H1 (cell line): ENCODE measurements at regions of chr5 and their contacts with region 1.

Region 1: DNA sequence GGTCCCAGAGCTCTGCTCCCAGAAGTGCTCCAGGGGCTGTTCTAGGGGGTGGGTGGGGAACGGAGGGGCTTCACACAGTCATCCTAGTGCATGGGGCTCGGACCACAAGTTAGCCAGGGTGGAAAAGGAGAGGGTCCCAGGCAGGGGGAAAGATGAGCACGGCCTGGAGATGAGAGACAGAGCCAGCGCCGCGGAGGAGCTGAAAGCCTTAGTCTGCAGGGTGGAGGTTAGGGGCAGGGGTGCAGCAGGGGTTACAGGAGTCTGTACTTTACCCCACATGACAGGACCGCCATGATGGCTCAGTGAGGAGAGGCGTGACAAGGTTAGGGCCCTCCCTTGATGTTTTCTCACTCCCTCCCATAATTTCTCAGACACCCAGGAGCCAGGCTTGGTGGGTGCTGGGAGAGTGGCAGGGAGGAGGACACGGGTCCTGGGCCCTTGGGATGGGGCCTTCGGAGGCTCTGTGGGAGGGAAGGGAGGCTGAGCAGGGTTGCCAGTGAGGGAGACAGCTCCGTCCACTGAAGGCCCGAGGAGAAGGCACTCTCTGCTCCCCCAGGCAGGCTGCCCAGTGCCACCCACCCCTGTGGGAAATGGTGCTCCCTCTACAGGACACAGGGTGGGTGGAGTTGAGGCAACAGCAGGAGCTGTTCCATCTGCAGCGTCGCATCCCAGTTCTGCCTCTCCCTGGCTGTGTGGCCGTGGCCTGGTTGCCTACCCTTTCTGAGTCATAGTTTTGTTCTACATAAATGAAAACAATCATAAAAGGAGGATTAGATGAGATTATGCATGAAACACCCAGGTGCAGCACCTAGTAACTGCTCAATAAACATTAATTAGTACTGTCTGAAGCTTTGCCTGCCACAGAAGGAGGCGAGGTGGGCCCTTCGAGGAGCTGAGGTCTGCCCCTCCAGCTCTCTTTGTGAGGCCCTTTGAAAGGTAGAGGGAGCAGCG is 66.2 kb downstream of the NDST1 start:
- DNase-seq: no peak
- H3K4me3 ChIP-seq: no peak overlapping the region
- H3K27ac ChIP-seq: no peak overlapping the region
- H3K4me1 ChIP-seq: no peaks in the 10 kb centered on the region
- H3K27me3 ChIP-seq: no peaks in the 10 kb centered on the region
- CTCF ChIP-seq: peak; percentile 22 to 60 (median 43)
- EP300 ChIP-seq: no peak
- POLR2A ChIP-seq: no peak
- RAD21 ChIP-seq: no peak; a peak in 1 of 4 replicates

Region 2: GRCh38 chr5:150544611-150545219 is 29.4 kb before region 1 on chr5:
- CTCF ChIA-PET with region 1: interaction called, 14 read pairs
- POLR2A ChIA-PET with region 1: no interaction called
- DNase-seq: peak; percentile 67 to 97
- H3K4me3 ChIP-seq: no peak overlapping the region
- H3K27ac ChIP-seq: 0 out of 2 replicates have a peak overlapping the region, but pooled peaks have one; percentile 14
- H3K4me1 ChIP-seq: no peaks in the 10 kb centered on the region; a peak in 1 of 7 replicates
- H3K27me3 ChIP-seq: no peaks in the 10 kb centered on the region
- CTCF ChIP-seq: peak; percentile 99 to 100 (median 99)
- EP300 ChIP-seq: no peak
- POLR2A ChIP-seq: 0 out of 3 replicates have a peak, but pooled peaks of 1 of the 2 experiments have one; percentile 30
- RAD21 ChIP-seq: peak; percentile 81 to 89

Region 3: DNA sequence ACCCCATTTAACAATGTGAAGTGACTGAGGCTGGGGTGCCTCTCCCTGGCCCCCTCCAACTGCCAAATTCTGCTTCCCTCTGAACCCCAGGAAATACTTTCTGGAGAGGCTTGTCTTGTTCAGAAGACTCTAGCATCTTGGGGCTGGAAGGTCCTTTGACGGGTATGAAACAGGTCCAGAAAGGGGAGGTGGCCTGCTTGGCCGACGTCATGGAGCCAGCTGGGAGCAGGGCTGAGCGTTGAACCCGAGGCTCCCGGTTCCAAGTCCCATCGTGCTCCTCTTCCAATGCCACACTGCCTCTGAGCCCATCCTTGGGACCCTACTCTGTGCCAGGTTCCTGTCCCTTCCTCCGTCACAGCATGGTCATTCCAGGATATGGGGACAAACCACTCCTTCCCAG is 19.3 kb before region 1 on chr5:
- CTCF ChIA-PET with region 1: interaction called, 98 read pairs
- POLR2A ChIA-PET with region 1: interaction called, 3 read pairs
- DNase-seq: no peak
- H3K4me3 ChIP-seq: no peak overlapping the region
- H3K27ac ChIP-seq: no peak overlapping the region
- H3K4me1 ChIP-seq: peaks cover 0 to 3% (median under 1%) of the 10 kb centered on the region in 4 experiments; a peak in 4 of 7 replicates
- H3K27me3 ChIP-seq: no peaks in the 10 kb centered on the region
- CTCF ChIP-seq: no peak
- EP300 ChIP-seq: no peak
- POLR2A ChIP-seq: no peak
- RAD21 ChIP-seq: no peak

Region 4: GRCh38 chr5:150589871-150590601 is 15.9 kb after region 1 on chr5:
- CTCF ChIA-PET with region 1: interaction called, 32 read pairs
- POLR2A ChIA-PET with region 1: interaction called, 5 read pairs
- DNase-seq: peak in 1 of 2 experiments; percentile 17
- H3K4me3 ChIP-seq: no peak overlapping the region
- H3K27ac ChIP-seq: no peak overlapping the region
- H3K4me1 ChIP-seq: peaks cover 0 to 7% (median 5%) of the 10 kb centered on the region in 4 experiments; a peak in 6 of 7 replicates
- H3K27me3 ChIP-seq: no peaks in the 10 kb centered on the region
- CTCF ChIP-seq: peak; percentile 61 to 69 (median 63)
- EP300 ChIP-seq: no peak
- POLR2A ChIP-seq: no peak
- RAD21 ChIP-seq: peak; percentile 60 to 70

Region 5: GRCh38 chr5:150595466-150596031 is 21.4 kb after region 1 on chr5:
- CTCF ChIA-PET with region 1: interaction called, 13 read pairs
- POLR2A ChIA-PET with region 1: no interaction called
- DNase-seq: no peak
- H3K4me3 ChIP-seq: no peak overlapping the region
- H3K27ac ChIP-seq: no peak overlapping the region
- H3K4me1 ChIP-seq: peaks cover 0 to 7% (median 5%) of the 10 kb centered on the region in 4 experiments; a peak in 6 of 7 replicates
- H3K27me3 ChIP-seq: no peaks in the 10 kb centered on the region
- CTCF ChIP-seq: no peak
- EP300 ChIP-seq: no peak
- POLR2A ChIP-seq: no peak
- RAD21 ChIP-seq: no peak